GM10248 (cell line): ENCODE measurements at regions of chr4 and their contacts with region 1.

Region 1: GRCh38 chr4:145161549-145161948 is 18.8 kb downstream of the OTUD4 start:
- DNase-seq: no peak
- CTCF ChIP-seq: no peak

Region 2: GRCh38 chr4:144734522-144734921 is 427.0 kb before region 1 on chr4:
- CTCF ChIA-PET with region 1: no interaction called
- POLR2A ChIA-PET with region 1: no interaction called
- DNase-seq: no peak
- CTCF ChIP-seq: no peak

Region 3: DNA sequence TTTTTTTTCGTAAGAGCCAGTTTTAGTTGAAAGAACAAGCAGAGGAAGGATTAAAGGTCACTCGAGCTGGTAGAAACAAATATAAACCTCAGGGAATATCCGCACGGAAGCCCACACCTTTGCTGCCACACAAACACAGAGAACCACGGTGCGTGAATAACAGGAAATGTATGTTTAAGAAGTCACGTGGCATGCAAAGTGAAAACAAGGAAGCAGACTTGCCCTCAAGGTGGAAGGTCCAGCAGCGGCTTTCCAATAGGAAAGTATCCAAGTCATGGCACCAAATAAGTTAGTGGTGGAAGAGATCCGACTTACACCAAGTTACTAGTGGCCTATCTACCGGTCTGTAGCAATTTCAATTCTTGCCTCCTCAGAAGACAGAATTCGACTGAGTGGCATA is 300.1 kb before region 1 on chr4:
- CTCF ChIA-PET with region 1: no interaction called
- POLR2A ChIA-PET with region 1: no interaction called
- DNase-seq: no peak
- CTCF ChIP-seq: no peak

Region 4: GRCh38 chr4:145132511-145133098 is 28.9 kb before region 1 on chr4:
- CTCF ChIA-PET with region 1: no interaction called
- POLR2A ChIA-PET with region 1: no interaction called
- DNase-seq: peak; percentile 52
- CTCF ChIP-seq: no peak

Region 5: GRCh38 chr4:145171911-145172310 is 10.4 kb after region 1 on chr4:
- CTCF ChIA-PET with region 1: interaction called, 11 read pairs
- POLR2A ChIA-PET with region 1: interaction called, 3 read pairs
- DNase-seq: no peak
- CTCF ChIP-seq: no peak